Left cardiac atrium (tissue), 4 donors: ENCODE measurements at regions of chr3 and their contacts with region 1.

Region 1: DNA sequence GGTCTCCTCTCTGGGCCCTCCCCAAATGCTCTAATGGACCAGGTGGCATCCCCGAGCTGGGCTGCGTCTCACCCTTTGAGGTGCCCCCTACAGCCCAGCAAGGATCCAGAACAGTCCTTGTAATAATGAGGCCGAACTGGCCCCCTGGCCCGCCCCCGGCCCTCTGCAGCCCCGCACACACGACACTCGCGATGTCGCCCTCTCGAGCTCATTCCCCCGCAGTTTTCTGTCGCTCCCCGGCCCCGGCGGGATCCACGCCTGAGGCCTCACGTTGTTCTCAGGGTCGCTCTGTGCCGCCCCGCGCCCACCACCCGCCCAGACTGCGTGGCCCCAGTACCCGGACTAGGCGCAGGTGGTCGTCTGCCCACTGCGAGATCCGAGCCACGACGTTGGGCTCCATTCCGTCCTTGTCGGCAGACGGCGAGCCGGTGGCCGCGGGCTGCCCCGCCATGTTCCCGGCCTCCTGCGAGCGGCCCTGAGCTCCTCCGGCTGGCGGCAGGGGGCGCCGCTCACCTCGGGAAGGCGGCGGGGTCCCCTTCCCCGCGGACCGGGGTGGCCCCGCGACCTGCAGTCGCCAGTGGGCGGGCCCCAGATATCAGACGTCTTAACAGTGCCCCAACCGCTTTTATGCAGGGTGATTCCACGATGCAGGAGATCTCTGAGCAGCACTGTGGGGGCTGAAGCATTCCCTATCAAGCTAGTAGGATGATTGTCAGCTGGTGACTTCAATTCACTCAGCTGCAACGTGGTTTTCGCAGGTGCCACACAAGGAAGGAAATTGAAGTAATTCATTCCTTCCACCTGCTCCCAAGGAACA is at the start of gene C3orf33:
- DNase-seq: peak; percentile 80
- ATAC-seq: peak; percentile 97 to 98
- total RNA-seq, gene C3orf33: 5.5 to 6.9 TPM

Region 2: GRCh38 chr3:155549087-155549486 is 256.9 kb before region 1 on chr3:
- intact Hi-C with region 1: no loop called
- DNase-seq: no peak
- ATAC-seq: no peak

Region 3: DNA sequence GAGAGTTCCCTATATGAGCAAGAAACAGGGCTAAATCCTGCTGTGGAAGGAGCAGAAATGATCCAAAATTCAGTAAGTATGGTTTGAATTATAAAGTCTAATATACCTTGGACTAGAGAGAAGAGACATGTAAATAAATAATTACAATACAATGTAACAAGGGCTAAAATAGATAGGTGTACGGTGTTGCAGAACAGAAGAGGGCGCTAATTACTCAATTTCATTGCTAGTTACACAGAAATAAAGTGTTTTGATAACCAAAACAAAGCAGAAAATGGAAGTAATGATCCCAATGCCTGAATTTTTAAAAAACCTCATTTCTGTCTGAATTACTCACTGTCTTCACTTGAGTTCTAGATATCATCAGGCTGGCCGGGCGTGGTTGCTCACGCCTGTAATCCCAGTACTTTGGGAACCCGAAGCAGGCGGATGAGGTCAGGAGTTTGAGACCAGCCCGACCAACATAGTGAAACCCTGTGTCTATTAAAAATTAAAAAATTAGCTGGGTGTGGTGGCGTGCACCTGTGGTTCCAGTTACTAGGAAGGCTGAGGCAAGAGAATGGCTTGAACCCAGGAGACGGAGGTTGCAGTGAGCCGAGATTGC is 52.9 kb before region 1 on chr3:
- intact Hi-C with region 1: loop called in 1 of 2 experiments (anchors 10 kb)
- DNase-seq: no peak
- ATAC-seq: no peak

Region 4: GRCh38 chr3:155854141-155854940 is 48.3 kb after region 1 on chr3 and contains the start of gene SLC33A1:
- intact Hi-C with region 1: loop called in 1 of 2 experiments (anchors 10 kb)
- DNase-seq: peak; percentile 100
- ATAC-seq: peak; percentile 98 to 99
- total RNA-seq, gene SLC33A1: 20.4 to 26.6 TPM